HepG2 (cell line): ENCODE measurements at regions of chr15 and their contacts with region 1.

Region 1: GRCh38 chr15:76311100-76311953 is at the start of gene ETFA:
- DNase-seq: peak; percentile 95
- ATAC-seq: peak; percentile 96
- H3K4me3 ChIP-seq: peak within 1 kb of the TSS; percentile 83 to 98 (median 97)
- H3K27ac ChIP-seq: peak within 1 kb of the TSS; percentile 96
- H3K4me1 ChIP-seq: peaks cover 64% of the 10 kb centered on the region
- H3K27me3 ChIP-seq: no peaks in the 10 kb centered on the region; a peak in 1 of 5 replicates
- CTCF ChIP-seq: 0 out of 2 replicates have a peak, but pooled peaks have one; percentile 4
- EP300 ChIP-seq: no peak
- POLR2A ChIP-seq: peak; percentile 96
- RAD21 ChIP-seq: no peak
- total RNA-seq, gene ETFA: 396 and 456 TPM in 2 replicates

Region 2: DNA sequence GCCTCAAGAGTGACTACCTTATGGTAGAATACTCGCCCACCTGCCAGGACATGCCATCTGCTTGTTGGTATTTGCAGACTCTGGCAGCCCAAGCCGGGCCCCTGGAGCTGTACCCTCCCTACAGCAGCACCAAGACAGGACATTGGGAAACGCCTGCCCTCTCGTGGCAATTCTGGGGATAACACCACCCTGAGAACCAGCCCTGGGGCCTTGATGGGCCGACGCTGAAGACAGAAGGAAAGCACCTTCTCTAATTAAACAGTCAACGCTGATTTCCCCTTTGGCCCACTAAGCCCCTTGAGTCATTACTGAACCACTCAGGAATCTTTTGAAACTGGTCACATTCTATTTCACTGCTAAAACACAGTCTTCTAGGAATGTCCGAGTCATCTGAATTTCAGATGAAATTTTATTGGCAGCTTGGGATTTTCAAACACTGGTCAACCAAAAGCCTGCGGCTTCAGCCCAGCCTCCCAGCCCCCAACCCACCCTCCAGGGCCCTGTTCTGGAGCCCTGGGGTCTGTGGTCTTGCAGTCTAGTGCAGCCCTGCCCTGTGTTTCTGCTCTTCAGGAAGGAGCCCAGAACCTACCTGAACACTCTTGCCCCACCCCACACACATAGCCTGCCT is 160.2 kb before region 1 on chr15:
- CTCF ChIA-PET with region 1: no interaction called
- POLR2A ChIA-PET with region 1: no interaction called
- in situ Hi-C with region 1: no loop called
- intact Hi-C with region 1: no loop called
- DNase-seq: peak; percentile 42
- ATAC-seq: peak; percentile 92
- H3K4me3 ChIP-seq: no peak overlapping the region
- H3K27ac ChIP-seq: no peak overlapping the region
- H3K4me1 ChIP-seq: no peaks in the 10 kb centered on the region; the same call in 1 of the 2 replicates
- H3K27me3 ChIP-seq: peaks cover 1 to 64% of the 10 kb centered on the region in 2 experiments; a peak in 4 of 5 replicates
- CTCF ChIP-seq: peak; percentile 85
- EP300 ChIP-seq: no peak
- POLR2A ChIP-seq: no peak
- RAD21 ChIP-seq: peak; percentile 42; the same call in 1 of the 2 replicates

Region 3: DNA sequence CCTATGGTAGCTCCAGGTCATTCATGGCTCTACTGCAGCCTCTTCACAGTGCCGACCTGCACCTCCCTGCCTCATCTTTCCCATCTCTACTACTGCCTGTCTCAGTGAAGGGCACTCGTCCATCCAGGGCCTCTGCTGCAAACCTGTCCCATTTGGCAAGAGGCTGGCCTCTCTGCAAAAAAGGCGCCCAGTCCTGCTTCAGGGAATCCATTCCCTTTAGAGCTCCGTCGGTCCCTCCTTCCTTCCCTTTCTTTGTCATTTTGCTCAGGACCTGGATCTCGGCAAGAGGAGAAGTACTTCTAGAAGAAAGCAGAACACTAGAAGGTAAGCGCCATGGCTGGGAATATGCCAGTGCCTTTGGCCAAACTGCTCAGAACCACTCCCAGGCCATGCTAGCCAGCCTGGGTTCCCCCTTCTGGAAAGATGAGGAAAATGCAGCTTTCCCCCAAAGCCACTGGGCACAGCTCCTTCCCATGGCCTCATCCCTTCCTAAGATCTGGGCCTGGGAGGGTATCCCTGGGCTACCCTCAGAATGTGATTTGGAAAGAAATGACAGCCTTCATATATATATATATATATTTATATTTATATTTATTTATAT is 18.9 kb after region 1 on chr15:
- CTCF ChIA-PET with region 1: no interaction called
- POLR2A ChIA-PET with region 1: interaction called, 132 read pairs
- in situ Hi-C with region 1: no loop called
- intact Hi-C with region 1: no loop called
- DNase-seq: peak; percentile 47
- ATAC-seq: peak; percentile 65
- H3K4me3 ChIP-seq: no peak overlapping the region
- H3K27ac ChIP-seq: no peak overlapping the region
- H3K4me1 ChIP-seq: peaks cover 35% of the 10 kb centered on the region
- H3K27me3 ChIP-seq: peaks cover 0 to 4% of the 10 kb centered on the region in 2 experiments; a peak in 2 of 5 replicates
- CTCF ChIP-seq: peak; percentile 75
- EP300 ChIP-seq: no peak
- POLR2A ChIP-seq: no peak
- RAD21 ChIP-seq: peak; percentile 52; the same call in 1 of the 2 replicates

Region 4: DNA sequence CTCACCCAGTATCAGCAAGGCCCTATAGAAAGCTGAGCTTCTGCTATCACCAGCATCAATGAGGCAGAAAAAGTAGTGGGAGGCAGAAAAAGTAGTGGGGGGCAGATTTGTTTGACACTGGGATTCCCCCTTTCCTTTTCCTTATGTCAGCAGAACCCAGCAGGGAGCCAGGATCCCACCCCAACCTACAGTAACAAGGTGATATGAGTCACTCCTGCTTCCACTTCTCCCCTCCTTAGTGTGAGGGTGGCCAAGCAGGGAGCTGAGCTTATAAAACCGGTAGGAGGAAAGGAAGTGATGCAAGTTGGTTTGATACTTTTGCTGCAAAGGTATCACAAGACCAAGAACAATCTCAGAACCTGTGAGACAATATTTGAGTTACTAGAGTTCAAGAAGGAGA is 465.2 kb after region 1 on chr15:
- CTCF ChIA-PET with region 1: no interaction called
- POLR2A ChIA-PET with region 1: no interaction called
- in situ Hi-C with region 1: no loop called
- intact Hi-C with region 1: no loop called
- DNase-seq: no peak
- ATAC-seq: no peak
- H3K4me3 ChIP-seq: no peak overlapping the region
- H3K27ac ChIP-seq: no peak overlapping the region
- H3K4me1 ChIP-seq: no peaks in the 10 kb centered on the region
- H3K27me3 ChIP-seq: no peaks in the 10 kb centered on the region
- CTCF ChIP-seq: no peak
- EP300 ChIP-seq: no peak
- POLR2A ChIP-seq: no peak
- RAD21 ChIP-seq: no peak